ENCODE measurements at regions of chr20 and their contacts with region 1.

Region 1: DNA sequence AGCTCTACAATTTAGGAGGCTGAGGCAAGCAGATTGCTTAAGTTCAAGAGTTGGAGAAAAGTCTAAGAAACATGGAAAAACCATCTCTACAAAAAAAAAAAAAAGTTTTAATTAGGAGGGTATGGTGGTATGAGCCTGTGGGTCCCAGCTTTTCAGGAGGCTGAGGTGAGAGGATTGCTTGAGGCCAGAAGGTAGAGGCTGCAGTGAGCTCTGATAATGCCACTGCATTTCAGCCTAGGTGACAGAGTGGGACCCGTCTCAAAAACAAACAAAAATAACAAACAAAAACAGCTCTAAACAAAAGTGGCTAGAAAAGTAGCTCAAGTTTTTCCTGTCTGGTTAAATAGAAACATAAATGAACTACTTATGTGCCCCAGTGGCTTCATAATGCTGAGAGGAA is 2133.6 kb upstream of the DEFB115 start:
- DNase-seq: no peak
- ATAC-seq: no peak
- H3K4me3 Mint-ChIP-seq: no peak overlapping the region
- H3K27ac Mint-ChIP-seq: no peak overlapping the region
- H3K4me1 Mint-ChIP-seq: no peaks in the 10 kb centered on the region
- H3K27me3 Mint-ChIP-seq: no peaks in the 10 kb centered on the region

Region 2: DNA sequence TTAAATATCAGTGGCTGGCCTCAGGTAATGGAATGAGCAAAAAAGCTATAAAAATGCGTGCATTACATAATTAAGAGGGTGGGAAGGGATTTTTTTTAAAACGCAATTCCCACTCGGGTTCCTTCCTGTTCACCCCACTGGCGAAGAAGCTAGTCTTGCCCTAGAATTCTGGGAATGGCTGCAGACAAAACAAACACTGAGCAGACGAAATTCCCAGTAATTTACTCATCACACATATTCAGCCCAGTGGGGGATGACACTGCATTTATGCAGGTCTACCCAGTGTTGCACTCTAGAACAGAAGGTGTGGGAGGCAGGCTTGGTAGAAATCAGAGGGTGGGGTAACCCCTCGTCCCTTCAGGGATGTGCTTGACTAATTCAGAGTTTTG is 561.4 kb before region 1 on chr20:
- CTCF ChIA-PET with region 1: no interaction called
- POLR2A ChIA-PET with region 1: no interaction called
- intact Hi-C with region 1: loop called in 1 of 2 experiments (anchors 10 kb)
- DNase-seq: no peak
- ATAC-seq: no peak
- H3K4me3 Mint-ChIP-seq: no peak overlapping the region
- H3K27ac Mint-ChIP-seq: no peak overlapping the region
- H3K4me1 Mint-ChIP-seq: no peaks in the 10 kb centered on the region
- H3K27me3 Mint-ChIP-seq: no peaks in the 10 kb centered on the region

Region 3: DNA sequence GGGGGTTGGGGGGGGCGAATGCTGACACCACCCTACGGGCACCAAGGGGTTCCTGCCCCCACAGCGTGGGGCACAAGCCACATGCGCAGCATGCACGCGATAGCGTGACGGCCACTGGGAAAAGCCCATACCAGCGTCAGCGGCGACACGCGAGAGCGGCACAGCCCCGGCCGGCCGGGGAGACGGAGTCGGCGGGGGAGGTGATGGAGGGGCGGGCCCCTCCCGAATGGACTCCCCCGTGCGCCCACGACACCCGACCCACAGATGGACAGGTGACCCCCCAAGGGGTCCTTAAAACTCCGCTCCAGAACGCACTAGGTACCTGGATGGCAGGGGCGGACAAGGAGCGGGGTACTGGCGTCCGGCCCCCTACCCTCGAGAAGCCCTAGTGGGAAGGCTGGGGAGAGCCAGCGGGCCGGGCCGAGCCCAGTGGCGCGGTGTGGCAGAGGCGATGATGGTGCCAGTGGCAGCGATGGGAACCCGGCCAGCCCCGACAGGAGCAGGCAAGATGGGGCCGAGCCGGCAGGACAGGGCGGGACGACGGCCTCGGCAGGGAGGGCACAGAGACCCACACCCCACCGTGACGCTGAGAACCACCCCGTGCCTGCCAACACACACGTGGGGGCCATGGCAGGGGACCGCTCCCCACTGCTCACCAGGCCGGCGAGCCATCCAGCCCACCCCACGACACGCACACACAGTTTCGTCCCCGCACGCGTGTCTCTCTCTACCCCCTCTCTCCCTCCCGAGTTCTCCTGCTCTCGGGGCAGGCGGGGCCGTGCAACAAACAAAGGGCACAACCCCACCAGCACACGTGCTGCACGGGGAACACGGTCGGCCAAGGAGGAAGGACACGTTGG is 173.8 kb after region 1 on chr20:
- CTCF ChIA-PET with region 1: no interaction called
- POLR2A ChIA-PET with region 1: no interaction called
- intact Hi-C with region 1: no loop called
- DNase-seq: no peak
- ATAC-seq: no peak
- H3K4me3 Mint-ChIP-seq: no peak overlapping the region
- H3K27ac Mint-ChIP-seq: no peak overlapping the region
- H3K4me1 Mint-ChIP-seq: no peaks in the 10 kb centered on the region
- H3K27me3 Mint-ChIP-seq: no peaks in the 10 kb centered on the region

Region 4: GRCh38 chr20:29873946-29874345 is 750.1 kb after region 1 on chr20:
- CTCF ChIA-PET with region 1: no interaction called
- POLR2A ChIA-PET with region 1: no interaction called
- intact Hi-C with region 1: loop called in 1 of 2 experiments (anchors 10 kb)
- DNase-seq: peak; percentile 53
- ATAC-seq: no peak
- H3K4me3 Mint-ChIP-seq: no peak overlapping the region
- H3K27ac Mint-ChIP-seq: no peak overlapping the region
- H3K4me1 Mint-ChIP-seq: no peaks in the 10 kb centered on the region
- H3K27me3 Mint-ChIP-seq: no peaks in the 10 kb centered on the region

Measured in activated CD4-positive, alpha-beta T cell treated with anti-CD3 and anti-CD28 coated beads for 36 hours (primary cell).